Activated naive CD4-positive, alpha-beta T cell treated with anti-CD3 and anti-CD28 coated beads for 36 hours (primary cell): ENCODE measurements at regions of chr15 and their contacts with region 1.

Region 1: GRCh38 chr15:84633311-84634227 is 20.5 kb downstream of the WDR73 start:
- DNase-seq: peak; percentile 63
- H3K4me3 Mint-ChIP-seq: peak overlapping the region; percentile 94
- H3K27ac Mint-ChIP-seq: peak overlapping the region; percentile 93
- H3K4me1 Mint-ChIP-seq: peaks cover 46% of the 10 kb centered on the region
- H3K27me3 Mint-ChIP-seq: no peaks in the 10 kb centered on the region

Region 2: DNA sequence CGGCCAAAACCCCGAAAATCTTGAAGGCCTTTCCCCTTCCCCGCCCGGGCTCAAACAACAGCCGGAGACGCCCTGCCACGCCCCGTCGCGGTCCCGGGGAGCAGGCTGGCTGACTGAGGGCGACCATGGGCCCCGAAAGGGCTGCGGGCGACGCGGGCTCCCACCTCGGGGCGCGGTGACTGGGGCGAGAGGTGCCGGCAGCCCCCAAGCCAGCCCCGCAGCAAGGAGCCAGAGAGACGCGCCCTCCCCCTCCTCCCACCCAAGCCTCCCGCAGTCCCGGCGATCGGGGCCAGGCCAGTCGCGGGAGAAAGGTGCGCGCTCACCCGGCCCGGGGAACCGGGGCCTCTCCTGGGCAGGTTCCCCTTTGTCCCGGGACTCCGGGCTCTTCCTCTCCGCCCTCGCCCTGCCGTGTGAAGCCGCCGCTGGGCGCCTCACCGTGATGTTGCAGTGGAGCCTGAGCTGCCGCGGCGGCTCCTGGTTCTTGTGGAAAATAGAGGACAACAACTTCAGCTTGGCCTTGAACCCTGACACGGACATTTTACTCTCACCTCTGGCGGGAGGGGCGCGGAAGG is 63.3 kb before region 1 on chr15:
- CTCF ChIA-PET with region 1: interaction called, 10 read pairs
- intact Hi-C with region 1: no loop called
- DNase-seq: peak; percentile 61
- H3K4me3 Mint-ChIP-seq: peak overlapping the region; percentile 82
- H3K27ac Mint-ChIP-seq: peak overlapping the region; percentile 18
- H3K4me1 Mint-ChIP-seq: peaks cover 15% of the 10 kb centered on the region
- H3K27me3 Mint-ChIP-seq: no peaks in the 10 kb centered on the region